SK-N-SH (cell line): ENCODE measurements at regions of chr11 and their contacts with region 1.

Region 1: DNA sequence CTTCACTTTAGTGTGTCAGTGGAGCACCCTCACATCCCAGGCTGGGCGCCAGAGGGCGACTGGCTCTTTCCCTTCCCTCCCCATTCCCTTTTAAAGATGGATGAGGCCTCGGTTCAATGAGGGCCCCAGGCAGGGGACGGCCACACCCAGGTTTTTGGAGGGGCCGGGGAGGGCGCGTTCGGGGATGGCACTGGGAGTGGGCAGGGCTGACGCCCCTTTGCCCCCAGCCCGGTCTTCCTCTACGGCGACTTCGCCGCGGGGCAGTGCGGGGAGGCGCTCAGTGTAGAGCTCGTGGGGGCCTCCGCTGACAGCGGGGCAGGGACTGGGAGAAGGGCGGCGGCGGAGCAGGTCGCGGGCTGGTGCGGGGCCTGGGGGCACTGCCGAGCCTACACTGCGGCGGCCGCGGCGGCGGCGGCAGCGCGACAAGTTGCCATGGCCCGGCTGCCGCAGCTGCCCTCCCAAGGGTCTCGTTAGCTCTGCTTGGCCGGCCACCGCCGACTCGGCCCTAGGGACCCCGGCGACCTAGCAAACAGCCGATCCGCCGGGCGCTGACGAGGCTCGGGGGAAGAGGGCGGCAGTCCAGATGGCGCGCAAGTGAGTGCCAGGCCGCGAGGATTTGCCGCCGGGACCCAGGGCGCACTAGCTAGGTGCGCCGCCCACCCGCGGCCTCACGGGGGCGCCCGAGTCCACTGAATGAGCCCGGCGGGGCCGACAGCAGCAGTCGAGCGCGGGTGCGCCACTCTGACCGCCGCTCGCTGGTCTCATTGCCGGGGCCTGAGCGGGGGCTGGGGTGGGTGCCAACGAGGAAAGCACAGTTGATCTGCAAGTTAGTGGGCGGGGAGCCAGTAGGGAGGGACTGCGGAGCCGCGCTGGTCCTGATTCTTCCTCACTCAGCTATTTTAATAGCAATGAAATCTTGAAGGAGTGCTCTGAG is 92.7 kb downstream of the RRM1 start:
- DNase-seq: peak; percentile 94
- H3K4me3 ChIP-seq: peak overlapping the region; percentile 58 to 66
- H3K27ac ChIP-seq: no peak overlapping the region
- H3K4me1 ChIP-seq: peaks cover 0 to 3% of the 10 kb centered on the region in 2 experiments; a peak in 1 of 4 replicates
- H3K27me3 ChIP-seq: peaks cover 23% of the 10 kb centered on the region; the same call in 1 of the 2 replicates
- CTCF ChIP-seq: peak; percentile 74
- EP300 ChIP-seq: no peak; a peak in 1 of 4 replicates
- RAD21 ChIP-seq: peak; percentile 92

Region 2: GRCh38 chr11:3867209-3868091 is 319.9 kb before region 1 on chr11:
- CTCF ChIA-PET with region 1: no interaction called
- POLR2A ChIA-PET with region 1: no interaction called
- DNase-seq: peak; percentile 34
- H3K4me3 ChIP-seq: no peak overlapping the region
- H3K27ac ChIP-seq: peak overlapping the region in 1 of 2 experiments; percentile 78; a peak in 2 of 4 replicates
- H3K4me1 ChIP-seq: peaks cover 0 to 10% of the 10 kb centered on the region in 2 experiments; a peak in 2 of 4 replicates
- H3K27me3 ChIP-seq: no peaks in the 10 kb centered on the region
- CTCF ChIP-seq: no peak
- EP300 ChIP-seq: 0 out of 4 replicates have a peak, but pooled peaks of 1 of the 2 experiments have one; percentile 17
- RAD21 ChIP-seq: no peak

Region 3: DNA sequence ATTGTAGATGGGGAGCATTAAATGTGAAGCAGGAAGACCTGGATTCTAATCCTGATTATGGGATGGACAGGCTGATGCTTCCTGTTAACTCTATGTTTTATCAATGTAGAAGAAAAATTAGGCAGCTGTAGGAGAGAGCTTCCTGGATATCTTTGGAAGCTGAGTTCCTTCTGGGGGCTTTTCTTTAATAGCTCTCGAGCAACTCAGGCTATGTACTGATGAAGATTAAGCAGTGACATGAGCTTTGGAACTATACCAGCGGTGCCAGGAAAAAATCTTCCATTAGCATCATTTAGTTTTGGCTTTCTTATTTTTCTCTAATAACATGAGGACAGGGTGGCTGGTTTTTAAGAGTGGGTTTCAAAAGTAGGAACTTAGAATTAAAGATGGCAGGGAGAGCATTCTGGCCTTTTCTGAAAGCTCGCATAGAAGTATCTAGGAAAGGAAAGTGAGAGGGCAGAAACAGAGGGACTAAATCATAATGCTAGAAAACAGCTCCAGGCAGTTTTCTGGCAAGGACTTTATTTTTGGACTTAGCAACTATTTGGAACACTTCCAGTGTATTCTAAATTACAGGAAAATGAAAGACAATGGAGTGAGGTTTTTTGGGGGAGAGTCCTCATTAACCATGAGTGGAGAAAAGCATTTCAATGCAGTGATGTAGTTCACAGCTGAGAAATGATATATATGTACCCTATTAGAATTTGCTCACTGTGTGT is 161.9 kb before region 1 on chr11:
- CTCF ChIA-PET with region 1: no interaction called
- POLR2A ChIA-PET with region 1: no interaction called
- DNase-seq: peak; percentile 44
- H3K4me3 ChIP-seq: no peak overlapping the region
- H3K27ac ChIP-seq: peak overlapping the region; percentile 73 to 93
- H3K4me1 ChIP-seq: peaks cover 15 to 18% of the 10 kb centered on the region in 2 experiments; a peak in 3 of 4 replicates
- H3K27me3 ChIP-seq: no peaks in the 10 kb centered on the region
- CTCF ChIP-seq: no peak
- EP300 ChIP-seq: peak in 1 of 2 experiments; percentile 33; a peak in 1 of 4 replicates
- RAD21 ChIP-seq: peak; percentile 22; the same call in 1 of the 2 replicates

Region 4: GRCh38 chr11:4094348-4095291 is 92.7 kb before region 1 on chr11 and contains the start of gene RRM1:
- CTCF ChIA-PET with region 1: no interaction called
- POLR2A ChIA-PET with region 1: no interaction called
- DNase-seq: peak; percentile 94
- H3K4me3 ChIP-seq: peak within 1 kb of the TSS; percentile 76 to 78
- H3K27ac ChIP-seq: peak within 1 kb of the TSS; percentile 77 to 80
- H3K4me1 ChIP-seq: peaks cover 0 to 6% of the 10 kb centered on the region in 2 experiments; a peak in 1 of 4 replicates
- H3K27me3 ChIP-seq: no peaks in the 10 kb centered on the region
- CTCF ChIP-seq: no peak
- EP300 ChIP-seq: no peak
- RAD21 ChIP-seq: no peak
- polyA plus RNA-seq, gene RRM1: 28.2 and 31.6 TPM in 2 replicates

Region 5: GRCh38 chr11:4211991-4212390 is 24.7 kb after region 1 on chr11:
- CTCF ChIA-PET with region 1: interaction called, 15 read pairs
- POLR2A ChIA-PET with region 1: no interaction called
- DNase-seq: peak; percentile 38
- H3K4me3 ChIP-seq: no peak overlapping the region
- H3K27ac ChIP-seq: no peak overlapping the region
- H3K4me1 ChIP-seq: no peaks in the 10 kb centered on the region
- H3K27me3 ChIP-seq: peaks cover 56% of the 10 kb centered on the region
- CTCF ChIP-seq: no peak
- EP300 ChIP-seq: no peak
- RAD21 ChIP-seq: no peak

Region 6: DNA sequence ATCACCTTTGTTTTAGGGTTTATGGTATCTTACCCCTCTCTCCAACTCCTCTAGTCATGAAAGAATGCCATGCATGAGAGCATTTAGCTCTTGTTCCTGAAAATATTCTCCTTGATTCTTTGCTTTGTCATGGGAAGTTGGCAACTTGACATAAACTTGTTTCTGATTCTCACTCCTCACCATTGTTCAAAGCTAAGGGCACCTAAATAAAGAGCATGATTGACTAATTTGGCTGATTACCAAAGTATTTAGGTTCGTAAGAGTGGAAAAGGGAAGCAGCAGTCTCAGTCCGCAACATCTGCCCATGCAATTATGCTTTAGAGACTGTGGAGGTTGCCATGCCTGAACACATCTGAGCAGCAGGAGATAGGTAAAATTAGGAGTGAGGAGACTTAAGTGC is 321.6 kb after region 1 on chr11:
- CTCF ChIA-PET with region 1: interaction called, 10 read pairs
- POLR2A ChIA-PET with region 1: no interaction called
- DNase-seq: no peak
- H3K4me3 ChIP-seq: no peak overlapping the region
- H3K27ac ChIP-seq: no peak overlapping the region
- H3K4me1 ChIP-seq: no peaks in the 10 kb centered on the region
- H3K27me3 ChIP-seq: peaks cover 5% of the 10 kb centered on the region; the same call in 1 of the 2 replicates
- CTCF ChIP-seq: no peak
- EP300 ChIP-seq: no peak
- RAD21 ChIP-seq: no peak

Region 7: GRCh38 chr11:4539603-4540219 is 352.4 kb after region 1 on chr11:
- CTCF ChIA-PET with region 1: interaction called, 63 read pairs
- POLR2A ChIA-PET with region 1: no interaction called
- DNase-seq: peak; percentile 18
- H3K4me3 ChIP-seq: no peak overlapping the region; a peak in 1 of 4 replicates
- H3K27ac ChIP-seq: no peak overlapping the region
- H3K4me1 ChIP-seq: no peaks in the 10 kb centered on the region
- H3K27me3 ChIP-seq: no peaks in the 10 kb centered on the region; the same call in 1 of the 2 replicates
- CTCF ChIP-seq: peak; percentile 74
- EP300 ChIP-seq: no peak
- RAD21 ChIP-seq: peak; percentile 58

Region 8: GRCh38 chr11:4636962-4637661 is 449.8 kb after region 1 on chr11 and contains the start of gene OR51D1:
- CTCF ChIA-PET with region 1: interaction called, 11 read pairs
- POLR2A ChIA-PET with region 1: no interaction called
- DNase-seq: peak; percentile 64
- H3K4me3 ChIP-seq: peak within 1 kb of the TSS in 1 of 2 experiments; percentile 50; a peak in 1 of 4 replicates
- H3K27ac ChIP-seq: no peak within 1 kb of the TSS
- H3K4me1 ChIP-seq: no peaks in the 10 kb centered on the region; a peak in 1 of 4 replicates
- H3K27me3 ChIP-seq: peaks cover 24% of the 10 kb centered on the region
- CTCF ChIP-seq: peak; percentile 81
- EP300 ChIP-seq: no peak
- RAD21 ChIP-seq: peak; percentile 75
- polyA plus RNA-seq, gene OR51D1: not detected in 2 replicates